ENCODE measurements at regions of chr1 and their contacts with region 1.

Region 1: DNA sequence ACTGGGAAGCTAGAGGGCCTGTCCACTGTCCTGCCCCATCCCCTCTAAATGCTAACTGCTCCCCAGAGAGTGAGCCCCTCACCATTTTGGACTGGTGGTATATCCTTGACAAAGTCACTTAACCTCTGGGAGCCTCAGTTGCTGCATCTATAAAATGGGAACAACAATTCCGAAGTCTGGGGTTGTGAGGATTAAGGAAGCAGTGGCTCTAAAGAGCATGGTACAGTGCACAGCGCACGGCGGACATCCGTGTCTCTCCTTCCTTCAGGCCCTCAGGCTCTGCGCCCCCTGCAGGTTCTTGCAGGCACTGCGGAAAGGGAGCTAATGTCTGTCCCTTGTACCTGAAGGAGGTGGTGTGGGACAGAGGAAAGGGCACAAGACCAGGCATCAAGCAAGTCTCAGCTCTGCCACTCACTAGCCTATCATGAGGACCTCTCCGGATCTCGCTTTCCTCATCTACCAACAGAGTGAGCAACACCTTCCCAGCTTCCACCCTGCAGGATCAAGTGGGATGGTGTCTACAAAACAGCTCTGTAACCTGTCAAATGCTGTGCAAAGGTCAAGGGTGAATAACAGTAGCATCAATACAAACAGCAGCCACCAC is 20.1 kb downstream of the ECE1 start:
- H3K4me3 ChIP-seq: no peak overlapping the region
- H3K27ac ChIP-seq: no peak overlapping the region
- H3K4me1 ChIP-seq: no peaks in the 10 kb centered on the region
- CTCF ChIP-seq: peak; percentile 87

Region 2: DNA sequence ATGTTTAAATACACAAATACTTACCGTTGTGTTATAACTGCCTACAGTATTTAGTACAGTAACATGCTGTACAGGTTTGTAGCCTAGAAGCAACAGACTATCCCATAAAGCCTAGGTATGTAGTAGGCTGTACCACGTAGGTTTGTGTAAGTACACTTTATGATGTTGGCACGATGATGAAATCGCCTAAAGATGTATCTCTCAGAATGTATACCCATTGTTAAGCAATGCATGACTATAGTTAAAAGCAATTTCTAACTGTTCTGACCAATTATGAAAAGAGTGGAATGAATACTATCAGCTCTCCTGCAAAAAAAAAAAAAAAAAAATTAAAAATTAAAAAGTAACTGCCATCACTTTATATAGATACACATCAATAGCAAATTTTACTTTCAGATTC is 494.5 kb before region 1 on chr1:
- CTCF ChIA-PET with region 1: no interaction called
- POLR2A ChIA-PET with region 1: no interaction called
- H3K4me3 ChIP-seq: no peak overlapping the region
- H3K27ac ChIP-seq: no peak overlapping the region
- H3K4me1 ChIP-seq: no peaks in the 10 kb centered on the region
- CTCF ChIP-seq: no peak

Region 3: GRCh38 chr1:21050031-21050430 is 220.2 kb before region 1 on chr1:
- CTCF ChIA-PET with region 1: no interaction called
- POLR2A ChIA-PET with region 1: no interaction called
- H3K4me3 ChIP-seq: no peak overlapping the region
- H3K27ac ChIP-seq: no peak overlapping the region
- H3K4me1 ChIP-seq: peaks cover 8% of the 10 kb centered on the region; the same call in 1 of the 2 replicates
- CTCF ChIP-seq: no peak

Region 4: GRCh38 chr1:21244986-21245687 is 25.1 kb before region 1 on chr1:
- CTCF ChIA-PET with region 1: interaction called, 11 read pairs
- POLR2A ChIA-PET with region 1: no interaction called
- H3K4me3 ChIP-seq: no peak overlapping the region
- H3K27ac ChIP-seq: no peak overlapping the region
- H3K4me1 ChIP-seq: no peaks in the 10 kb centered on the region
- CTCF ChIP-seq: no peak

Region 5: DNA sequence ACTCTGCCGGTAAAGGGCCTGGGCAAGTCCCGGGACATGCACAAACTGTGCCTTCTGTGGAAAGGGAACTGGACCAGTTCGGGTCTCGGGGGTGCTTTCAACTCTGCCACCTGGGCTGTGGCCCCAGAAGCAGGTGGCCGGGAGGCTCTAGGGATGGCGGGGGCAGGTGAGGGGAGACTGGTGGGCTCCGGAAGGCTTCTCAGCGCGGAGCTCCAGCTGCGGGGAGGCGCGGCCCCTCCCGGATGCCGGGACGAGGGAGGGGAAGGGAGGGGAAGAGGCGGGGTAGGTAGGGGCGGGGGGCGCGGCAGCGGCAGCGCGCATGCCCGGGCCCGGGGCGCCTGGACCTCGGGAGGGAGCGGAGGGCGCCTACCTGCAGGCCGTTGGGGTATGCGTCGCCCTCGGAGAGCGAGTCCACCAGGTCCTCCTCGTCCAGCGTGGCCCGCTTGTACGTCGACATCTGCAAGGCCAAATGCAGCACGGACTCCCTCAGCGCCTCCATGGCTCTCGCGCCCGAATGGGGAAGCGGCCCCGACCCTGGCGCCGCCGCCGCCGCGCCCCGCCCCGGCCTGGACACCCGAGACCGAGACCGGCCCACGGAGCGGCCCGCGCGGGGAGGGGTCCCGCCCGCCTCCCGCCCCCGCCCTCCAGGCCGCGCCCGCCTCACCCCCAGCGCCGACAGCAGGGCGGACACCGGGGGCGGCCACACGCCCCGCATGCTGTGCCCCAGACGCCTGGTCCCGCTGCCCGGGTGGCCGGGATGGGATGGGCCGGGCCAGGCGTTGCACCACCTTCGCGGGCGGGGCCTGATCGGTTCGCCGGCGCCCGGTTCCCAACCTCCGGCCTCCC is 19.7 kb after region 1 on chr1 and contains the start of gene ECE1:
- CTCF ChIA-PET with region 1: interaction called, 51 read pairs
- POLR2A ChIA-PET with region 1: no interaction called
- H3K4me3 ChIP-seq: peak within 1 kb of the TSS; percentile 70
- H3K27ac ChIP-seq: no peak within 1 kb of the TSS; the same call in 1 of the 2 replicates
- H3K4me1 ChIP-seq: peaks cover 4% of the 10 kb centered on the region; the same call in 1 of the 2 replicates
- CTCF ChIP-seq: no peak

Region 6: GRCh38 chr1:21324368-21325141 is 54.4 kb after region 1 on chr1:
- CTCF ChIA-PET with region 1: interaction called, 43 read pairs
- POLR2A ChIA-PET with region 1: no interaction called
- H3K4me3 ChIP-seq: no peak overlapping the region
- H3K27ac ChIP-seq: peak overlapping the region; percentile 40
- H3K4me1 ChIP-seq: peaks cover 25% of the 10 kb centered on the region
- CTCF ChIP-seq: no peak

Region 7: GRCh38 chr1:21355956-21356355 is 85.8 kb after region 1 on chr1:
- CTCF ChIA-PET with region 1: interaction called, 23 read pairs
- POLR2A ChIA-PET with region 1: interaction called, 3 read pairs
- H3K4me3 ChIP-seq: no peak overlapping the region
- H3K27ac ChIP-seq: no peak overlapping the region
- H3K4me1 ChIP-seq: no peaks in the 10 kb centered on the region
- CTCF ChIP-seq: no peak

Measured in HEK293 (cell line).